ENCODE measurements at regions of chr16 and their contacts with region 1.

Region 1: GRCh38 chr16:47826070-47826469 is 329.7 kb downstream of the ABCC12 start:
- DNase-seq: no peak
- ATAC-seq: no peak
- H3K4me3 ChIP-seq: no peak overlapping the region
- H3K4me3 Mint-ChIP-seq: no peak overlapping the region
- H3K27ac ChIP-seq: no peak overlapping the region
- H3K27ac Mint-ChIP-seq: no peak overlapping the region
- H3K4me1 ChIP-seq: no peaks in the 10 kb centered on the region
- H3K4me1 Mint-ChIP-seq: no peaks in the 10 kb centered on the region
- H3K27me3 ChIP-seq: no peaks in the 10 kb centered on the region
- H3K27me3 Mint-ChIP-seq: peaks cover 0 to 3% of the 10 kb centered on the region in 2 donors

Region 2: DNA sequence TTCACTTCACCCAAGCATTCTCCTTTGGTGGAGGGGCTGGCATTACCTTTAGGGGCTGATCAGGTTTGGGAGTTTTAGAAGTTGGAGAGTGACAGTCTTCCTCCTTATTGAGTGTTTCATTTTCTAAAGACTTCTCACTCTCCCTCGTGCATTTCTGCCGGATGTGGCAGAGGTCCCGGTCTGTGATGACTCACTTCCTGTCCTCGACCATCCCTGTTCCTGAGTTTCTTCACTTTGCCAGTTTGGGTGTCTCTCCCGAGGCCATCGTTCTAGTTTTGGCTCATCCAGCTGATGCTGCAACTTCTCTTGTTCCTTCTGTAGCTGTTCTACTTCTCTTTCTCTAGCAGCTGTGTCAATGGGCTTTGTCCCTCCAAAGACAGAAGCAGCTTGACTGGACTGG is 260.6 kb before region 1 on chr16:
- CTCF ChIA-PET with region 1: no interaction called
- POLR2A ChIA-PET with region 1: interaction called in 1 of 2 experiments, 10 read pairs
- DNase-seq: peak in 3 of 35 experiments; percentile 1 to 27 (median 1)
- ATAC-seq: peak in 1 of 4 experiments; percentile 50
- H3K4me3 ChIP-seq: peak overlapping the region in 1 of 2 donors; percentile 24
- H3K4me3 Mint-ChIP-seq: peak overlapping the region; percentile 26 to 60 (median 53)
- H3K27ac ChIP-seq: peak overlapping the region; percentile 50
- H3K27ac Mint-ChIP-seq: peak overlapping the region; percentile 76 to 89
- H3K4me1 ChIP-seq: peaks cover 0 to 16% of the 10 kb centered on the region in 2 experiments
- H3K4me1 Mint-ChIP-seq: peaks cover 60 to 71% (median 67%) of the 10 kb centered on the region in 3 donors
- H3K27me3 ChIP-seq: no peaks in the 10 kb centered on the region
- H3K27me3 Mint-ChIP-seq: no peaks in the 10 kb centered on the region

Measured in T-cell (primary cell).